ENCODE measurements at regions of chr1 and their contacts with region 1.

Region 1: DNA sequence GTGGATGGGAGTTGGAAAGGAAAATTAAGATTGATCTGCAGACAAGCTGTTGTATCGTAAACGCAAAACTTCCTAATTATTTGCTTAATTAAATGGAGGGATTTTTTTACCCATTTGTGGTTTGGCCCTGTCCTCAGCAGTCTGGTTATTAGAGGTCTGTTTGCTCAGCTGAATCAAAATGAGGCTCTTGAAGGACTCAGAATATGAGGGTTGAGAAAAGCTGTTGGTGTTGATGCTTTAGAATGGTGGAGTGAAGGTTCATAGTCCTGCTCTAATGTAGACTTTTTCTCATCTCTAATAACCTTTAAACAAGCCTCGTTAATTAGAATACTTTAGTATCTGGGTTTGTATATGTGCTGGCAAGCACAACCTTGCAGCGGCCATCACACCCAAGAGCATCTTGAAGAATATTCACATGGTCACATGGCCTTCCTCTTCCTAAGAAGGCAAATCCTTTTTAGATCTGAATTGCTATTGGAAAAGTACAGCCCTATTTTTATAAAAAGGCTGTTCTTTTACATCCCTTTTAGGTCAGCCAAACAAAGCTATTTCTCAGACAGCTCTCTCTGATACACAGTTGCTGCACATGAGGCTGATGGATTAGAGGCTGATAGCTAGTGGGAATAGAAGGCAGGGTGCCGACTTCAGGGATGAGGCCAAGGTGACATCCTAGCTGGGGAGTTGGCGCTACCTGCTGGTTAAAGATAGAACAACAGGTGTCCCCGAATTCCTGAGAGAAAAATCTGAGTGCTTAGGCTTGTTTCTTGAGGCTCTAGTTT is 53.8 kb downstream of the MACF1 start:
- DNase-seq: peak; percentile 62 to 71 (median 65)
- H3K4me3 ChIP-seq: no peak overlapping the region
- H3K27ac ChIP-seq: peak overlapping the region in 1 of 2 experiments; percentile 33
- H3K4me1 ChIP-seq: peaks cover 3 to 17% (median 10%) of the 10 kb centered on the region in 4 experiments
- H3K27me3 ChIP-seq: no peaks in the 10 kb centered on the region

Region 2: DNA sequence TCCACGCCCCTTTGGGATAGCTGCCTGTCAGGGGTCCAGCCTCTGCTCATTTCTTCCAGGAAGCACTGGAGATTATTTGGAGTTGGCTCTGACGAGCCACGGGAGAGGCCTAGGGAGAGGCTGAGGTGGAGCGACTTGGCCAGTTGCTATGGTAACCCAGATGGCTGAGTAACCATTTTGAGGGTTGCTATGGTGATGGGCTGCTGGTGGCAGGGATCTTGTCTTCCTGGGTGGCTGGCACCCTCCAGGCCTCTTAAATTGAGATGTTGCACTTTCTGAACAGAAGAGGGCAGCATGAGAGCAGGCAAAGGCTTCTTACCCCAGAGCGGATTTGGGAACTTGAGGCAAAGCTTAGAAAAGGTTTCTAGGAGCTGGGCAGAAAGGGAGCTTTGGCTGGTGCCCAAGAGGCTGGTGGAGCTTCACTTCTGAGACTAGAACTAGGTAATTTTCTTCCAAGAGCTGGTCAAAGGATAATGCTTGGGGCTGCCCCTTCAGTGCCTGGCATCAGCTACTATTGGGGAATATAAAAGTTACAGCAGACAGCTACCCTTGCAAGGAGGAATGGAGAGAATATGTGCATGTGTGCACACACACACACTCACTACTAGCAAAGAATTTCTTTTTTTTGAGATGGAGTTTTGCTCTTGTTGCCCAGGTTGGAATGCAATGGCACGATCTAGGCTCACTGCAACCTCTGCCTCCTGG is 159.6 kb before region 1 on chr1:
- CTCF ChIA-PET with region 1: interaction called, 43 read pairs
- POLR2A ChIA-PET with region 1: interaction called, 6 read pairs
- DNase-seq: peak; percentile 74 to 76 (median 75)
- H3K4me3 ChIP-seq: no peak overlapping the region
- H3K27ac ChIP-seq: no peak overlapping the region
- H3K4me1 ChIP-seq: peaks cover 9 to 17% (median 15%) of the 10 kb centered on the region in 4 experiments
- H3K27me3 ChIP-seq: no peaks in the 10 kb centered on the region

Region 3: DNA sequence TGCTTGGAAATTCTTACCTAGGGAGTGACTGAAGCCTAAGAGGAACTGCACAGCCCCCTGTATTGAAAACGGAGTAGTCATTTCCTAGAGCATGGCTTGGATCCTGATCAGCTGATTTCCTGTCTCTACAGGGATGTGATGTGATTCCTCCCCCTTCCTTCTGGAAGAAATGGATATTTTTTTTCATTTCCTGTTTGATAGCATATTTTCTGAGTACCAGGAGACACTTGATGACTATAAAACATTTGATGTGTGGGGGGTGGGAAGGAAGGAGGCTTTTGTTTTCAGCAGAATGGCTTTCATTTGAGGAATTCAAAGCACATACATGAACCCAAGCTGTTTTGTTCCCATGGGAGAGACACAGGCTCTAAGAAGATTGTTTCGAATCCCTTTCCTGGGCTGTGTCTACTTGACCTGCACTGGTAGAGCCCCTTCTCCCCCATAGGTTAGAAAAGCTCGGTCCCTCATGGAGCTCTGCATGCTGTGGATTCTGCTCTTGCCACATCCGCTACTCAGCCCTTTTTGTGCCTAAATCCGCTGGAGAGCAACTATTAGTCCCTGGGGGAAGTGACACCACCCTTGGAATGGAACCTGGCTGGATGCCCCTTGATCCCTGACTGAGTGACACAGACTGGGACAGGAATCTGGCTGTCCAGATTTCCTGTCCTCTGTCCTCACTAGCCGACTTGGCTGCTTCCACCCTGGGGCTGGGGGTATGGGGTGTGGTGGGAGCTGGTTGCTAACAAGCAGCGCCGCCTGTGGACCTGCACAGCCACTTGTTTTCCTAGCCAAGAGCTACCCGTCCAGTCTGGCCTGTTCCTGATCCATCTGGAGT is 125.6 kb before region 1 on chr1:
- CTCF ChIA-PET with region 1: interaction called, 27 read pairs
- POLR2A ChIA-PET with region 1: no interaction called
- DNase-seq: no peak
- H3K4me3 ChIP-seq: no peak overlapping the region
- H3K27ac ChIP-seq: no peak overlapping the region
- H3K4me1 ChIP-seq: peaks cover 0 to 18% (median 9%) of the 10 kb centered on the region in 4 experiments
- H3K27me3 ChIP-seq: no peaks in the 10 kb centered on the region

Region 4: GRCh38 chr1:39183503-39184353 is 74.6 kb before region 1 on chr1:
- CTCF ChIA-PET with region 1: interaction called, 251 read pairs
- POLR2A ChIA-PET with region 1: no interaction called
- DNase-seq: peak; percentile 81 to 93 (median 91)
- H3K4me3 ChIP-seq: no peak overlapping the region
- H3K27ac ChIP-seq: peak overlapping the region; percentile 2 to 25
- H3K4me1 ChIP-seq: peaks cover 6 to 29% (median 20%) of the 10 kb centered on the region in 4 experiments
- H3K27me3 ChIP-seq: no peaks in the 10 kb centered on the region

Region 5: DNA sequence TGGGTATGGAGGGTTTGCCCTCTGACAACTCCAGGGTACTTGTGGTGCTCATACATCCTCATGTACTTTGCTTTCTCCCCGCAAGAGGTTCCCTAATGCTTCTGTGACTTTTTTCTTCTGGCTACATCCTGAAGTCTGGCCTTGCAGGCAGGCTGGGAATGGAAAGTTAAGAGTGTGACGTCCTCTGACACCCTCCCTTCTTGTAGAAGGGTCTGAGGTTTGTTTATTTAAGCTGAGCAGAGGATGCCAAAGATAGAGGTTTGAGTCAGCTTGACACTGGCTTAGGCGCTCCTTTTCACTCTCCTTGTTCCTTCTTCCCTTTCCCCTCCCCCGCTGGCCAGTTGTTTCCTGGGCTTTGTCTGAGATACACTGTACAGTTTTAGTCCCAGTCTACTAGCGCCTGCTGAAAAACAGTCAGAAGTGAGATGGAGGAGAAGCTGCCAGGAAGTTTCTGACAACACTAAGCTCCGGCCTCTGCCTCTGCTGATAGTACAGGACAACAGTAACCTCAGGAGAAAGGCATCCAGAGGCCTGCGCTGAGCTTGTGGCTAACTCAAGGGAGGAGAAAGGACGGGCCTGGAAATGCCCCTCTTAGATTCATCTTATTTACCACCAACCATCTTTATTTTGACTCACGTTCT is 53.8 kb before region 1 on chr1 and contains the start of gene MACF1:
- CTCF ChIA-PET with region 1: interaction called, 49 read pairs
- POLR2A ChIA-PET with region 1: interaction called, 3 read pairs
- DNase-seq: peak; percentile 79 to 91 (median 86)
- H3K4me3 ChIP-seq: peak within 1 kb of the TSS; percentile 42 to 99 (median 85)
- H3K27ac ChIP-seq: peak within 1 kb of the TSS; percentile 82 to 91
- H3K4me1 ChIP-seq: peaks cover 7 to 60% (median 31%) of the 10 kb centered on the region in 4 experiments
- H3K27me3 ChIP-seq: no peaks in the 10 kb centered on the region

Region 6: DNA sequence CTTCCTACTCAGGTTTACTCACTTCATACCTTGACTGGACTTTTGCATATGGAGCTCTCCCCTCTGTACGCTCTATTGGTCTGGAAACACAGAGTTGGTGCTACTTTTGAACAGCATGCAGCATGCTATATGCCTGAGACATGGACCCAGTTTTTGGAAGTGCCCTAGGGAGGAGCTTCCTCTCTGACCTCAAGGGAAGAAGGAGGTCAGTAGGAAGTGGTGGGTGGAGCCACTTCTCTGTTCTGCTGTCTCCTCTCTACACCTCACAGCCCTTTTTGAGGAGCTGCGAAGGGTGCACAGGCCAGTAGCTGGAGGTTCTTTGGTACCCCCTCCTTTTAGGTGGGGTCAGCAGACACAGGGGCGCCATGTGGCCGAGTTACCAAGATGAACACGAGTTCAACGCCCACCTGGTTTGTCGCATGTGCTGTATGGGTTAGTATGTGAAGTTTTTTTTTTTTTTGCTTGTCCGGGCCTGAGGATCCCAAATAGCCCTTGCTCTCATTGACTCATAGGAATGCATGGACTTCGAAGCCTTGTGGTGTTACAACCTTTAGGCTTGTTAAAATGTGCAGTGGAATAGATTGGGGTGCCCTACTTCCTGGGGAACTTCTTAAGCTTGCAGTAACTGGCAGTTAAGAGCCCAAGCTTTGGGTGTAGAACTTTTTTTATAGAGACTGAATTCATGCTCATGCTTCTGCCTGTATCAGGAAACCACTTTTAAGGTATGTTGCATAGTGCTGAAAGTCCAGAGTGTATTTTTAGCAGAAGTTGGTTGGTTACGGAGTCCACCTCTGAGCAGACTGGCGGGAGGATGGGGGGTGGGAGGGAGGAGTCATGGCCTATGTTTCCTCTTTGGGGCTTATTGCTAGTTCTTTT is 43.1 kb before region 1 on chr1:
- CTCF ChIA-PET with region 1: interaction called, 32 read pairs
- POLR2A ChIA-PET with region 1: no interaction called
- DNase-seq: peak; percentile 56 to 92 (median 88)
- H3K4me3 ChIP-seq: peak overlapping the region in 6 of 7 experiments; percentile 52 to 76 (median 70)
- H3K27ac ChIP-seq: peak overlapping the region; percentile 79 to 93
- H3K4me1 ChIP-seq: peaks cover 35 to 77% (median 59%) of the 10 kb centered on the region in 4 experiments
- H3K27me3 ChIP-seq: no peaks in the 10 kb centered on the region

Region 7: DNA sequence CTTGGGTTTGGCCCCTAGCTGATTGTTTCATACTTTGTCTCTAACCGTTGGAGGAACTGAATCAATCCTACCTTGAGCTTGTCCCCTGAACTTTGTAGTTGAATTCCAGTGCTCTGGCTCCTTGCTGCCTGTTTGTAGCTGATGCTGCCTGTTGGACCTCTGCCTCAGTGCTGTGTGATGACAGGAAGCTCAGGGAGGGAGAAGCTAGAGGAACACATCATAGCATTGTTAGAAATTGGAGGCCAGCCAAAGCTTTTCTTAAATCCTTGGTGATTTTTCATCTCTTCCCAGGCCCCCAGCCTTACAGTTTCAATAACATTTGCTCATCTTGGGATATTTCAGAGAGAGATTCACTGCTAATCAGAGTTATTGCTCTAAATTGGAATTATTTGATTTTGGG is 19.9 kb before region 1 on chr1:
- CTCF ChIA-PET with region 1: interaction called, 12 read pairs
- POLR2A ChIA-PET with region 1: no interaction called
- DNase-seq: no peak
- H3K4me3 ChIP-seq: no peak overlapping the region
- H3K27ac ChIP-seq: peak overlapping the region; percentile 17 to 37
- H3K4me1 ChIP-seq: peaks cover 0 to 8% (median 6%) of the 10 kb centered on the region in 4 experiments
- H3K27me3 ChIP-seq: no peaks in the 10 kb centered on the region